Common myeloid progenitor, CD34-positive (primary cell): ENCODE measurements at regions of chr13 and their contacts with region 1.

Region 1: GRCh38 chr13:46126552-46127357 is 21.9 kb upstream of the CPB2 start:
- DNase-seq: peak; percentile 84 to 90 (median 87)
- H3K4me3 ChIP-seq: no peak overlapping the region
- H3K27ac ChIP-seq: peak overlapping the region in 1 of 2 experiments; percentile 44
- H3K4me1 ChIP-seq: peaks cover 21 to 54% (median 52%) of the 10 kb centered on the region in 4 experiments
- H3K27me3 ChIP-seq: no peaks in the 10 kb centered on the region

Region 2: DNA sequence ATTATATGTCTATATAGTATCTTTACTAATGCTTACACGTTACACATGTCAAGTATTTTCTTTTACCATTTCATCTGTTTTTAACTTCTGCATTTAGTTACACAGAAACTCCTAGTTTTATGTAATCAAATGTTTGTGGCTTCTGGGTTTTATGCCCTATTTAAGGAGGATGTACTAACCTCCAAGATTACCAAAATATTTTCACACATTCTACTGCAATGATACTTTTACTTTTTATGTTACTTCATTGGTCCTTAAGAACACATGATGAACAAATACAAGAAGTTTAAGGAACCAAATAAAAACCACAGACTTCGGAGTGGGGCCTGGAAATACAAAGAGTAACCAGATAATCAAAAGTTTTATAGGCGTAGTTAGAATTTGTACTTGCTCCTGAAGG is 111.4 kb before region 1 on chr13:
- CTCF ChIA-PET with region 1: interaction called, 13 read pairs
- POLR2A ChIA-PET with region 1: no interaction called
- DNase-seq: peak in 2 of 3 donors; percentile 28 to 38
- H3K4me3 ChIP-seq: no peak overlapping the region
- H3K27ac ChIP-seq: no peak overlapping the region
- H3K4me1 ChIP-seq: peaks cover 0 to 4% (median 0%) of the 10 kb centered on the region in 4 experiments
- H3K27me3 ChIP-seq: no peaks in the 10 kb centered on the region

Region 3: DNA sequence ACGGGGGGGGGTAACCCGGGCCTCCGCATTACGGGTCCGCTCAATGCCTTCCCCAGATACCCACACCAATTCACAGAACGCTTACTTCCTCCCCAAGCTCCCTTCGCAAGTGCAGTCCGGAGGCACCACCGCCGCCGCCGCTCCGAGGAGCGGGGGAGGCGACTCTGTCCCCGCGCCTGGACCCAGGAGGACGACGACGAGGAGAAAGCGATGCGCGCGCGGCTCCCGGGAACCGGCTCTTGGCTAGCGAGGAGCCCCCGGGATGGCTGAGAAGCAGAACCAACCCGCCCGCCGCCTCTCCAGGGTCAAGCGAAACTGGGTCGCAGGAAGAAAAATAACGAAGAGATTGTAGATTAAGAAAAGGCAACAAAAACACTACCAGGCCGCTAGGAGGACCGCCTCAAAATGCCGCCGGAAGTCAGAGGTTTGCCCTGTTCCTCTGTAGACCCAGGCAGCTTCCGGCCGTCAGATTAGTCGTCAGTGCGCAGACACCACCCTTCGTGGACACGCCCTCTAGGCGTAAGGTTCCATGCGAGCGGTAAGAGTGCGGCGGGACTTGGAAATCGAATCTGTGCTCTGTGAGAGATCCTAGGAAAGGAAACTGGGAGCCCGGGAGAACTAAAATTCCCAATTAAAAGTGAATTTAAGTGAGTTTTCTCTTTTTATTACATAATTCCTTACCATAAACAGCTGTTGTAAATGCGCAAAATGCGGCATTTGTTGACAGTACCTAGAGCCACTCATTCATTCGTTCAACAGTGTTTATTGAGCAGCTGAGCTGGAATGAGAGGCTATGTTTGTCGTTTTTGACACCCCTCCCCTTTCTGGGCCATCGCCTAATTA is 74.2 kb before region 1 on chr13 and contains the start of gene ZC3H13:
- CTCF ChIA-PET with region 1: interaction called, 13 read pairs
- POLR2A ChIA-PET with region 1: interaction called, 11 read pairs
- DNase-seq: peak; percentile 98 to 99 (median 98)
- H3K4me3 ChIP-seq: peak within 1 kb of the TSS; percentile 79 to 99 (median 90)
- H3K27ac ChIP-seq: peak within 1 kb of the TSS; percentile 95 to 98
- H3K4me1 ChIP-seq: peaks cover 12 to 30% (median 24%) of the 10 kb centered on the region in 4 experiments
- H3K27me3 ChIP-seq: no peaks in the 10 kb centered on the region

Region 4: DNA sequence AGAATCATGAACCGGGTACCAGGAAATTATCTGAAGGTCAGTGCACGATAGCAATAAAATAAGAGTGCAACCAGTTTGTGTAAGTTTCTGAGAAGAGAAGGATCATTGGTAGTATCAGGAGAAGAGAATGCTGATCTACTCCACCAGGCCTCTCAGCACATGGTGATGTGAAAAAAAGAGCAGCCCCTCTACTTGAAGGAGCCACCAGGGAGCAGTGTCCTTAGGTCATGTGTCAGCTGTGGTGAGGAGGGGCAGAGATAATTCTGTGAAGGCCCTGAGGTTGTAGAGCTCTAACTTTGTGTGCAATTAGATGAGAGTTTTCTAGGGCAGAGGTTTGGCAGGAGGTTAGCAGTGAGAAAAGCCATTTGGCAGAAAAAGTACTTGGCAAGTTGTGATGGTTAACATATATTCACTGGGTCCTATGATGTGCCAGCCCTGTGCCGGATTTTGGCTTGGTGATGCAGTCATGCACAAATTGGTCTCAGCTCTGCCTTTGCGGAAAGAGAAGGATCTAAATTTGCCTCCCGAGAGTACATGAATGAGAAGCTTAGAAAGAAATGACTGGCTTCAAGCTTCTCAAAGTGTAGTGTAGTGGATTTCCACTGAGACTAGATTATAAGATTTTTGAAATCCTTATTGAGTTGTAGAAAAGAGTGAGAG is 55.0 kb before region 1 on chr13:
- CTCF ChIA-PET with region 1: interaction called, 24 read pairs
- POLR2A ChIA-PET with region 1: no interaction called
- DNase-seq: peak in 2 of 3 donors; percentile 50 to 67
- H3K4me3 ChIP-seq: no peak overlapping the region
- H3K27ac ChIP-seq: no peak overlapping the region
- H3K4me1 ChIP-seq: no peaks in the 10 kb centered on the region
- H3K27me3 ChIP-seq: no peaks in the 10 kb centered on the region

Region 5: DNA sequence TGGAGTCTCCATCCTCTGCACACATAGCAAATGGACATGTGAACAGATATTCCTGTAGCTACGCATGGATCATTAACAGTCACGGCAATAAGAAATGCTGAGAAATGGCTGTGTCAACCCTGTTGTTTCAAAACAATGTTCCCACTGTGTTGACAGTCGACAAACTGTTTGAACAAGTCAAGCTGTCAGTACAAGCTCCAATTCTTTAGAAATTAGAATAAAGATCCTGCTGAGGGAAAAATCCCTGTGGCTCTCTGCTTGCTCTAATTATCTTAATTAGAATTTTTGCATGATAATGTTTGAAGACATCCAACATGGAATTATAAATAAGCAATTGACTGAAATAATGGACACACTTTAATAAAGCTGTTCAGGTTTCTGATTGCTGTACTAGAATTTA is 16.0 kb after region 1 on chr13:
- CTCF ChIA-PET with region 1: interaction called, 19 read pairs
- POLR2A ChIA-PET with region 1: no interaction called
- DNase-seq: no peak
- H3K4me3 ChIP-seq: no peak overlapping the region
- H3K27ac ChIP-seq: no peak overlapping the region
- H3K4me1 ChIP-seq: no peaks in the 10 kb centered on the region
- H3K27me3 ChIP-seq: no peaks in the 10 kb centered on the region

Region 6: DNA sequence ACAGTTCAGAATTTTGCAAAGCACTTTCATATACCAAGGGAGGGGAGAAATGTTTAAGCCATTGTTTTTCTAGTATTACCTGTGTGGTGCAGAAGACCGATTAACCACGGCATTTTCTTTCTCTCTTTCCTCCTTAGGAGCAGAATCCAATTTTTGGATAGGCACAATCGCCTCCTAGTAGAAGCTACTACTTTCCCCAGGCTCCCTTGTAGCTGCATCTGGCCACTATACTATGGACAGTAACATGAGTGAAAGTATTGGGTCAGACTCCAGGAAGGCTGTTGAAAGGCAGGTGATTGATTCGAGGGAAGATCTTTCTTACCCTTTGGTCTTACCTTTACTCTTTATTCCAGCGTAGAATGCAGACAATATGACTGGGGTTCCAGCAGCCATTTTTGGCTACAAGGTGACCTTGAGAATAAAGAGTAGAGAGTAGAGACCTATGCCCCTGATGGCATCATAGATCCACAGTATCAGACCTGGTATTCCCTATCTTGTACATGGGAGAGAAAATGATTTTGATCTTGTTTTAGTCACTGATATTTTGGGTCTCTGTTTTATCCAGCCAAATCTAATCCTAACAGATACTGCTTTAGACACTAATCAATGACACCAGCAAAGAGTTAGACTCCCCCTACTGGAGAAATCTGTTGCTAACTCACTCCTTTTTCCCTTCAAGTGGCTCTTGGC is 162.0 kb after region 1 on chr13:
- CTCF ChIA-PET with region 1: interaction called, 12 read pairs
- POLR2A ChIA-PET with region 1: no interaction called
- DNase-seq: peak; percentile 58 to 82 (median 75)
- H3K4me3 ChIP-seq: no peak overlapping the region
- H3K27ac ChIP-seq: no peak overlapping the region
- H3K4me1 ChIP-seq: peaks cover 0 to 5% (median 0%) of the 10 kb centered on the region in 4 experiments
- H3K27me3 ChIP-seq: no peaks in the 10 kb centered on the region